Activated CD4-positive, alpha-beta memory T cell treated with anti-CD3 and anti-CD28 coated beads, Interleukin-2, amount 10 ng/mL, durations not matched to agents 7 days and 5 days (primary cell): ENCODE measurements at regions of chr1 and their contacts with region 1.

Region 1: GRCh38 chr1:54791880-54792522 is 9.1 kb downstream of the TTC22 start:
- DNase-seq: peak; percentile 52
- H3K4me3 Mint-ChIP-seq: no peak overlapping the region
- H3K27ac Mint-ChIP-seq: no peak overlapping the region
- H3K4me1 Mint-ChIP-seq: peaks cover 34% of the 10 kb centered on the region
- H3K27me3 Mint-ChIP-seq: no peaks in the 10 kb centered on the region

Region 2: GRCh38 chr1:54681358-54681757 is 110.6 kb before region 1 on chr1:
- CTCF ChIA-PET with region 1: no interaction called
- POLR2A ChIA-PET with region 1: no interaction called
- DNase-seq: no peak
- H3K4me3 Mint-ChIP-seq: no peak overlapping the region
- H3K27ac Mint-ChIP-seq: no peak overlapping the region
- H3K4me1 Mint-ChIP-seq: no peaks in the 10 kb centered on the region
- H3K27me3 Mint-ChIP-seq: peaks cover 2% of the 10 kb centered on the region

Region 3: GRCh38 chr1:54764133-54764921 is 27.7 kb before region 1 on chr1 and contains the start of gene PARS2:
- CTCF ChIA-PET with region 1: interaction called, 18 read pairs
- POLR2A ChIA-PET with region 1: no interaction called
- DNase-seq: peak; percentile 96
- H3K4me3 Mint-ChIP-seq: peak within 1 kb of the TSS; percentile 89
- H3K27ac Mint-ChIP-seq: peak within 1 kb of the TSS; percentile 71
- H3K4me1 Mint-ChIP-seq: peaks cover 17% of the 10 kb centered on the region
- H3K27me3 Mint-ChIP-seq: no peaks in the 10 kb centered on the region
- total RNA-seq, gene PARS2: 3.3 to 4.0 TPM

Region 4: GRCh38 chr1:54781023-54781723 is 10.8 kb before region 1 on chr1:
- CTCF ChIA-PET with region 1: no interaction called
- POLR2A ChIA-PET with region 1: no interaction called
- DNase-seq: no peak
- H3K4me3 Mint-ChIP-seq: no peak overlapping the region
- H3K27ac Mint-ChIP-seq: no peak overlapping the region
- H3K4me1 Mint-ChIP-seq: no peaks in the 10 kb centered on the region
- H3K27me3 Mint-ChIP-seq: no peaks in the 10 kb centered on the region

Region 5: GRCh38 chr1:55103891-55104290 is 311.9 kb after region 1 on chr1:
- CTCF ChIA-PET with region 1: no interaction called
- POLR2A ChIA-PET with region 1: no interaction called
- DNase-seq: no peak
- H3K4me3 Mint-ChIP-seq: no peak overlapping the region
- H3K27ac Mint-ChIP-seq: no peak overlapping the region
- H3K4me1 Mint-ChIP-seq: no peaks in the 10 kb centered on the region
- H3K27me3 Mint-ChIP-seq: no peaks in the 10 kb centered on the region